Pancreas (tissue), 10 donors: ENCODE measurements at regions of chr16 and their contacts with region 1.

Region 1: DNA sequence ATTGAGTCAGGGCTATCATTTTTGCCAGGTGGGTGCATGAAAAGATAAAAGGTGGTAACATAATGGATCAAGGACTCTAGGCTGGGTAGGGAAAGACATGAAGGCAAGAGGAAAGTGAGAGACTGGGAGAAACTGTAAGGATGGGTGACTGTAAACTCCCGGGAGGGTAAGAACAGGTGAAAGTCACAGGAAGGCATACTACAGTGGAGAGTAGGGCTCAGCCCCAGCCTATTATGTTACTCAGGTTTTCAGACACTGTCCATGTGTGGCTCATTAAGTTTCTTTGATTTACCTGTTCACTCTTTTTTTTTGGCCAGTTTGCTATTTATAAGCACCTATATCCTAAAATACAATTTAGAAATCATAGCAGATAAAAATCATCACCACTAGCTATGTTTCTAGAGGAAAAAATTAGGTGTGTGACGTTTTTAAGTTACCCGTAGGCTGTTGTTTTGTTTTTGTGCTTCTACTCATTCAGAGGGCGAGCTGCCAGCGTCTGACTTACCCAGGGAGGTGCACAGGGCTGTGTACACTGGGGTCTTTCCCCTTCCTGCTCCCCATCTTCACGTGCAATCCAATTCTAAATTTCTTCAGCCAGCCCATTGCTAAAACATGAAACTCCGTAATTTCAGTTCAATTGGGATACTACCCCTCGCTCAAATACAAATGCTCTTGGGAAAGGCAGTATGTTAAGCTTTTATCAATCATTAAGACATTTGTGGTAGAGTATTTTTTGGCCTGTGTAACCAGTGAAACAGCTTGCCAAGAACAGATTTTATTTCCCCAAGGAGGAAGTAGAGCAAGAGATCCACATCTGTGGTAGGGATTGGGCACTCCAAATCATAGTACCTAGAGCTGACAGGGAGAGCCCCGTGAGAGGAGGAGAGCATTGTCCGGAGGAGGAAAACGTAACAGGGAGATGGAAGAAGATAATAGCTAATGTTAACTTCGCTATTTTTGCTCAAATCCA is 21.7 kb upstream of the VWA3A start:
- DNase-seq: no peak
- ATAC-seq: peak; percentile 57 to 81 (median 60)
- H3K4me3 ChIP-seq: no peak overlapping the region
- H3K27ac ChIP-seq: no peak overlapping the region
- H3K4me1 ChIP-seq: peaks cover 0 to 13% (median 8%) of the 10 kb centered on the region in 3 donors
- H3K27me3 ChIP-seq: no peaks in the 10 kb centered on the region
- CTCF ChIP-seq: no peak

Region 2: DNA sequence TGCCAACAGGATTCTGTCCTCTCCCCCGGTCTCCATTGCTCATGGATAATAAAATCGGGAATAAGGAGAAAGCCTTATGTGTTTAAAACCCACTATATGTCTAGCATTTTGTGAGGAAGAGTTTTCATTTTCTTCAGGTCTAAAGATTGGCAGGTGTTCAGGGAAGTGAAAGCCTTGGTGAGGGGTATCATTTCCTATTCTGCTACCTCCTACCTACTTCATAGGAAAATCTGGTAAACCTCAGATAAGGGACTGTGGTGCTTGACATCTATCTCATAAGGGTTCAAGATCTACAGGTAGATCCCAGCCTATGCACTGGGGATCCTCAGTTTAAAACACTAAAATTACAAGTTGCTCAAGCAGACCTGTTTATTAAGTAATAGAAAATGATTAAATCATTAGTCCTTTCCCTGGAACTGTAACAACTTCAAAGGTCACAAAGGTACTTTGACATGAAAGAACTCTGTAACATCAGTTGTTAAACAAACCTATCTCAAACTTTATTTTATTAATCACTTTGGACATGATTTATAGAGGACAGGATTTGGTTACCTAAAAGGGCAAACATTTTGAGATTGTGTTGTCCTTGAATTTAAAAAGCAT is 56.3 kb before region 1 on chr16:
- intact Hi-C with region 1: loop called in 2 of 3 experiments (anchors 5 to 10 kb)
- DNase-seq: no peak
- ATAC-seq: peak in 3 of 4 donors; percentile 30 to 51 (median 38)
- H3K4me3 ChIP-seq: no peak overlapping the region
- H3K27ac ChIP-seq: no peak overlapping the region
- H3K4me1 ChIP-seq: peaks cover 16 to 19% (median 16%) of the 10 kb centered on the region in 3 donors
- H3K27me3 ChIP-seq: no peaks in the 10 kb centered on the region
- CTCF ChIP-seq: no peak